Activated CD4-positive, alpha-beta T cell treated with anti-CD3 and anti-CD28 coated beads, Interleukin-2, amount 10 ng/mL, durations not matched to agents 24 days and 14 days (primary cell): ENCODE measurements at regions of chr2 and their contacts with region 1.

Region 1: DNA sequence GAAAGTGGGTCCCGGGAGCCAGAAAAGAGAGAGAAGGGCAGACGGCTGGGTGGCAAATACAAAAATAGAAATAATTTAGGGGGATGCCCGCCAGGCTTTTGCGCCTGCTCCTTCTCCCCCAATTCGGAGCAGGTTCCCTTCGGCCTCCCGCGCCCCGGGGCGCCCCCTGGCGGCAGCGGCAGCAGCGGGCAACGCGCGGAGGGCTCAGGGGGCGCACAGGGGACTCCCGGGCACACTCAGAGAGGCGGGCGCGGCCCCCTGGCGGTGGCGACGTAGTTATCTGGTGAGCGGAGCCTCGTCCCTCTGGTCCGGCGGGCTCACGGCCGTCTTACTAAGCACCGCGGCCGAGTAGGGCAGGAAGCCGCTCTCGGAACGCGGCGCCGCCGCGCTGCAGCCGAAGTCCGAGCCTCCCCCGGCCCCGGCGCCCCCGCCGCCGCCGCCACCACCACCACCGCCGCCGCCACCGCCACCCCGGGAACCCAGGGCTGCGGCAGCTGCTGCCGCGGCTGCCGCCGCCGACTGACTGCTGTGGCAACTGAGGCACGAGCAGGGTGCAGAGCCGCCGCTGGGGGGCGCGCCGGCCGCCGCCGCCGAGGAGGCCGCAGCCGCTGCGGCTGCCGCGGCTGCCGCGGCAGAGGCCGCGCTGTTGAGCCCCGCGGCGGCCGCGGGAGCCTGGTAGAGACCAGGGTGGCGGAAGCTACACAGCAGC is 3.8 kb downstream of the EVX2 start:
- DNase-seq: peak; percentile 70
- H3K4me3 Mint-ChIP-seq: peak overlapping the region; percentile 53
- H3K27ac Mint-ChIP-seq: peak overlapping the region; percentile 88
- H3K4me1 Mint-ChIP-seq: peaks cover 12% of the 10 kb centered on the region
- H3K27me3 Mint-ChIP-seq: peaks cover 69% of the 10 kb centered on the region

Region 2: GRCh38 chr2:174334781-174335251 is 1745.2 kb before region 1 on chr2 and contains the start of gene SP9:
- intact Hi-C with region 1: loop called (anchors 5 kb)
- DNase-seq: peak; percentile 73
- H3K4me3 Mint-ChIP-seq: peak within 1 kb of the TSS; percentile 45
- H3K27ac Mint-ChIP-seq: peak within 1 kb of the TSS; percentile 75
- H3K4me1 Mint-ChIP-seq: peaks cover 25% of the 10 kb centered on the region
- H3K27me3 Mint-ChIP-seq: peaks cover 71% of the 10 kb centered on the region
- total RNA-seq, gene SP9: not detected in 2 replicates

Region 3: DNA sequence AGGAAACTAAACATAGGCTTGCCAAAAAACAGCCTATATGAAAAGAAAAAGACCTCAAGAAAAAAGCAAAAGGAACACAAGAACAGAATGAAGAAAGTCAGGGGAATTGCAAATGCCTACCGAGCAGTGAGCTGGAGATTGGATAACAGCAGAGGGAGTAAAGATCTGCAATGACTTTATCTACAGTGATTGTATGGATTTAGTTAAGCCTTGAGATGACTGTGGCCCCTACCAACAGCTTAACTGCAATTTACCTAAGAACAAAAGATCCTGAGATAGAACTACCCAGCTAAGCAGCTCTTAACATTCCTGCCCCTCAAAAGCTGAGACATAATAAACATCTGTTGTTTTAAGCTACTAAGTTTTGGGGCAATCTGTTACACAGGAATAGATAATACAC is 98.4 kb before region 1 on chr2:
- intact Hi-C with region 1: no loop called
- DNase-seq: no peak
- H3K4me3 Mint-ChIP-seq: no peak overlapping the region
- H3K27ac Mint-ChIP-seq: no peak overlapping the region
- H3K4me1 Mint-ChIP-seq: no peaks in the 10 kb centered on the region
- H3K27me3 Mint-ChIP-seq: no peaks in the 10 kb centered on the region

Region 4: GRCh38 chr2:176096986-176097819 is 17.2 kb after region 1 on chr2:
- intact Hi-C with region 1: loop called (anchors 2 kb)
- DNase-seq: peak; percentile 85
- H3K4me3 Mint-ChIP-seq: peak overlapping the region; percentile 81
- H3K27ac Mint-ChIP-seq: no peak overlapping the region
- H3K4me1 Mint-ChIP-seq: peaks cover 13% of the 10 kb centered on the region
- H3K27me3 Mint-ChIP-seq: peaks cover 83% of the 10 kb centered on the region

Region 5: GRCh38 chr2:176110975-176111663 is 31.1 kb after region 1 on chr2:
- intact Hi-C with region 1: loop called (anchors 2 kb)
- DNase-seq: no peak
- H3K4me3 Mint-ChIP-seq: no peak overlapping the region
- H3K27ac Mint-ChIP-seq: peak overlapping the region; percentile 12
- H3K4me1 Mint-ChIP-seq: peaks cover 6% of the 10 kb centered on the region
- H3K27me3 Mint-ChIP-seq: peaks cover 76% of the 10 kb centered on the region

Region 6: GRCh38 chr2:176157499-176158185 is 77.7 kb after region 1 on chr2:
- intact Hi-C with region 1: loop called (anchors 2 kb)
- DNase-seq: peak; percentile 66
- H3K4me3 Mint-ChIP-seq: no peak overlapping the region
- H3K27ac Mint-ChIP-seq: peak overlapping the region; percentile 72
- H3K4me1 Mint-ChIP-seq: peaks cover 2% of the 10 kb centered on the region
- H3K27me3 Mint-ChIP-seq: peaks cover 82% of the 10 kb centered on the region

Region 7: GRCh38 chr2:176328149-176328548 is 248.2 kb after region 1 on chr2:
- intact Hi-C with region 1: no loop called
- DNase-seq: no peak
- H3K4me3 Mint-ChIP-seq: no peak overlapping the region
- H3K27ac Mint-ChIP-seq: no peak overlapping the region
- H3K4me1 Mint-ChIP-seq: no peaks in the 10 kb centered on the region
- H3K27me3 Mint-ChIP-seq: no peaks in the 10 kb centered on the region